ENCODE measurements at regions of chr22 and their contacts with region 1.

Region 1: DNA sequence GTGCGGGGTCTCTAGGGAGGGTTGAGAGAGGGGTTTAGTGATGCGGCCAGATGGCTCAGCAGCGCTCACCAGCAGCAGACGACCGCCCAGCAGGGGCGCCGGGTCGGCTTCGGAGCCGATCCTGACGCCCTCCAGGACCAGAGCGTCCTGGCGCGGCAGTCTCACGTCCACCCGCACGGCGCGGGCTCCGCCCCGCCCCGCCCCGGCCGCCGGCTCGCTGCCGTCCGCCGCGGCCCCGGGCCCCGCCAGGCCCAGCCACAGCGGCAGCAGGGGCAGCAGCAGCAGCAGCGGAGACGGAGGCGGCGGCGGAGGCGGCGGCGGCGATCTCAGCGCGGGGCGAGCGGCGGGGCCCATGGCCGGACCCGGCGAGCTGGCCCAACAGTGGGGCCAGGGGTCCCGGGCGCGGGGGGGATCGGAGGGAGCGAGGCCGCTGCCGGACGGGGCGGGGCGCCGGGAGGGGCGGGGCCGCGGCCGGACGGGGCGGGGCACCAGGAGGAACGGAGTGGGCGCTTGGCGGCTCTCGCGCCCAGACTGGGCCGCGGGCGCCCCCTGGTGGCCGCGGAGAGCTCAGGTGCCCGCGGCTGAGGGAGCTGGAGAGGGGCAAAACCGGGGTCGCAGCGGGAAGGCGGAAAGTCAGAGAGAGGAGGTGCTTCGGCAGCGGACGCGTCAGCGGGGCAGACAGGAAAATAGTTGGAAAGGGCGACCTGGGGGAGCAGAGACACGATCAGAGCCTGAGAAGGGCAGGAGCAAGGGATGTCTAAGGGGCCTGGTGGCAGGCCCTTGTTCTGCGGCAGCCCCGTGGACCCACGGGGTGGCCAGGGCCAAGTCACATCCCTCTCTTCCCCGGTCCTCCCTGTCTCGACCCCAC is at the start of gene RNF215:
- DNase-seq: peak; percentile 97
- CTCF ChIP-seq: peak; percentile 89

Region 2: GRCh38 chr22:30104501-30105156 is 282.6 kb before region 1 on chr22:
- in situ Hi-C with region 1: loop called (anchors 10 kb)
- DNase-seq: no peak
- CTCF ChIP-seq: no peak

Region 3: DNA sequence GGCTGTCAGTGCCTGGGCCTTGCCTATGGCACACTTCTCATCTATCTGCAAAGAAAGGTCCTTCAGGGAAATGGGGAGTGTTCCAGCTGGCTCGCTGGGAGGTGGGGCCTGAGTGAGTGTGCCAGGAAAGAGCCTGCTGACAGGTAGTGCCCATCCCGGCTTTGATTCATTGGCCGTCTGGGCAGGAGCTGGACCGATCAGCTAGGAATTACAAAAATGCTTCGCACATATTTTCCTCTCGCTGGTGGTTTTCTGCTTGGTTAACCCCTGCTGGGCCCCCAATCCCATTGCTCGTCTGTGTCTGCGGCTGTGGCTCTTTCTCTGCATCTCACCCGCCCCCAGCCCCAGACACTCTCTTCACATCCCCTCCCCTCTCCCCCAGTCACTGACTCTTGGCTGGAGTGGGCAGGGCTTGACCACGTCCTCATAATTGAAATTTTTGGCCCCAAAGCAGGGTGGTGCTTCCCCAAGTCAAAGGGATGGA is 151.5 kb before region 1 on chr22:
- in situ Hi-C with region 1: no loop called
- DNase-seq: no peak
- CTCF ChIP-seq: no peak

Region 4: GRCh38 chr22:30289134-30289979 is 97.8 kb before region 1 on chr22 and contains the start of gene CASTOR1:
- in situ Hi-C with region 1: loop called (anchors 5 kb)
- DNase-seq: peak; percentile 99
- CTCF ChIP-seq: no peak

Region 5: GRCh38 chr22:30485362-30485988 is 98.3 kb after region 1 on chr22:
- in situ Hi-C with region 1: loop called (anchors 10 kb)
- DNase-seq: peak; percentile 96
- CTCF ChIP-seq: peak; percentile 88